ENCODE measurements at regions of chr4 and their contacts with region 1.

Region 1: DNA sequence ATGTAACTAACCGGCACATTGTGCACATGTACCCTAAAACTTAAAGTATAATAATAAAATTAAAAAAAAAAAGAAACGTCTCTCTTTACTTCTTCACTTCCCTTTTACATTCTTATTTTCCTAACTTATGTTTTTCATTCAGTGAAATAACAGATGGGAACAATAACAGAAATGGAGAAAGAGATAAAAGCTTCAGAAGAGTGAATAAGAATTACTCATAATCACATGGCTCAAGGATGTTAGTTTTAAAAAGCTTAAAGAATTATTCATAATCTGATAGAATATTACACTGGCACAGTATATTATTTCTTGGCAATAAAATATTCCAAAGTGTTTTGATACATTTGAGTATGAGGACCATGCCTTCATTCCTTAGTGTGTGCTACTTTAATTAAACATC is 175.6 kb downstream of the COL25A1 start:
- DNase-seq: no peak
- ATAC-seq: no peak
- H3K4me3 ChIP-seq: no peak overlapping the region
- H3K27ac ChIP-seq: no peak overlapping the region
- H3K4me1 ChIP-seq: no peaks in the 10 kb centered on the region
- H3K27me3 ChIP-seq: peaks cover 47% of the 10 kb centered on the region
- CTCF ChIP-seq: no peak
- POLR2A ChIP-seq: no peak
- RAD21 ChIP-seq: no peak

Region 2: GRCh38 chr4:108965016-108965415 is 161.8 kb before region 1 on chr4:
- CTCF ChIA-PET with region 1: no interaction called
- POLR2A ChIA-PET with region 1: no interaction called
- RAD21 ChIA-PET with region 1: interaction called in 1 of 2 experiments, 12 read pairs
- intact Hi-C with region 1: no loop called
- DNase-seq: no peak
- ATAC-seq: no peak
- H3K4me3 ChIP-seq: no peak overlapping the region
- H3K27ac ChIP-seq: no peak overlapping the region
- H3K4me1 ChIP-seq: no peaks in the 10 kb centered on the region
- H3K27me3 ChIP-seq: peaks cover 42% of the 10 kb centered on the region
- CTCF ChIP-seq: no peak
- POLR2A ChIP-seq: no peak
- RAD21 ChIP-seq: no peak